Panc1 (cell line): ENCODE measurements at regions of chr11 and their contacts with region 1.

Region 1: DNA sequence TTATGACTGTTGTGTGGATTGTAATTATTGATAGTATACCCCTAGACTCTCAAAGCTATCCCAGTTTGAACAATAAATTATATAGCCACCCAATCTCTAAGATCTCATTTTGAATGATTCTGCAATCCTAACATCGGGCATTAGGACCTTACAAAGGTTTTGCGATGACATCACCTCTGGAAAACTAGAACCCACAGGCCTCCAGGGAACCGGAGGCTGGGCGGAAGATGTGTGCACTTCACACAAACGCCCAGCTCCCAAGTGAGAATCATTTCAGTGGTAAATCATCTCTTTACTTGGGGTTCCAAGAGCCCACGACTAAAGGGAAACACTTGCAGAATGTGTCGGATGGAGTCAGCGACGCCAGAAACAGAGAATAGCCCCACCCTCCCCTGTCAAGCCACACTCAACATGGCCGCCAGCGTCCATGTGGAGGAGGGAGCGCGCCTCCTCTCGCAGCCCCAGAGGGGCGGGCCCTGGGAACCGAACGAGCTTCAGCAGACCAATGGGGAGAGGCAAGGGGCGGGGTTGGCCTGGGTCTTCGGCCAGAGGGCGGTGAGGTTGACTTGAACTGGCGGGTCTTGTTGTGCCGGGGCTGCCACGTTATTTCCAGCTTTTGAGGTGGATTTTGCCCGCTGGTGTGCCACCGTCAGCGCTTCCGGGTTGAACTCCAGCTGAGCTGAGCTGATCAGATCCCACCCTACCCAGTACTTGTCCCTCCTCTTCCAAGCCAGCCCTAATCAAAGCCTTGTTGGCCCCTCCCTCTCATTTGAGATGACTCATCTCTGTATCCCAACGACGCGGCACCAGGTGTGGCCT is 8.4 kb upstream of the MRPL48 start:
- DNase-seq: peak; percentile 99
- ATAC-seq: peak; percentile 100
- H3K4me3 ChIP-seq: peak overlapping the region; percentile 49 to 61
- H3K27ac ChIP-seq: peak overlapping the region; percentile 96
- H3K4me1 ChIP-seq: peaks cover 3% of the 10 kb centered on the region; the same call in 1 of the 2 replicates
- H3K27me3 ChIP-seq: no peaks in the 10 kb centered on the region
- CTCF ChIP-seq: no peak

Region 2: GRCh38 chr11:73866095-73866579 is 86.8 kb after region 1 on chr11:
- CTCF ChIA-PET with region 1: no interaction called
- POLR2A ChIA-PET with region 1: interaction called, 11 read pairs
- in situ Hi-C with region 1: no loop called
- intact Hi-C with region 1: no loop called
- DNase-seq: no peak
- ATAC-seq: no peak
- H3K4me3 ChIP-seq: no peak overlapping the region
- H3K27ac ChIP-seq: no peak overlapping the region
- H3K4me1 ChIP-seq: peaks cover 6% of the 10 kb centered on the region
- H3K27me3 ChIP-seq: no peaks in the 10 kb centered on the region
- CTCF ChIP-seq: no peak